Activated CD4-positive, alpha-beta memory T cell treated with anti-CD3 and anti-CD28 coated beads, Interleukin-2, amount 10 ng/mL, durations not matched to agents 7 days and 5 days (primary cell): ENCODE measurements at regions of chr7 and their contacts with region 1.

Region 1: GRCh38 chr7:150567169-150567568 is at the start of gene GIMAP4:
- DNase-seq: peak; percentile 39
- H3K4me3 Mint-ChIP-seq: peak within 1 kb of the TSS; percentile 95
- H3K27ac Mint-ChIP-seq: peak within 1 kb of the TSS; percentile 93
- H3K4me1 Mint-ChIP-seq: peaks cover 70% of the 10 kb centered on the region
- H3K27me3 Mint-ChIP-seq: no peaks in the 10 kb centered on the region
- total RNA-seq, gene GIMAP4: 277 to 282 TPM

Region 2: DNA sequence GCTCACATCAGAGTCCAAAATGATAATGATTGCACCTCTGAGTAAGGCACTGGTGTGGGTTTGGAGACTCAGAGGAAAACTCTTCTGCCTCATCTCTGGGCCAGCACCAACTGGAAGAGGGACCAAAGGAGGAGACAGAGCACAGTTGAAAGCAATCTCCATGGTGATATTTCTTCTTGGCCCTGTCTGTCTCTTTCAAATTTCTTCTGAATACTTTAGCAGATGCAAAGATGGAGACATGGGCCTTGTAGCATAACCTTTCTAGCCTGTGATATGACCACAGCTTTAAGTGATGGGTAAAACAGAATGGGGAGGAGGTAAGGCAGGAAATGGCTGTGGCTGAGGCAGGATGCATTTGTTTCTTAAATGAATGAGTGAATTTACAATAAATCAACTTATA is 64.7 kb before region 1 on chr7:
- CTCF ChIA-PET with region 1: no interaction called
- POLR2A ChIA-PET with region 1: interaction called, 11 read pairs
- DNase-seq: peak; percentile 68
- H3K4me3 Mint-ChIP-seq: peak overlapping the region; percentile 29
- H3K27ac Mint-ChIP-seq: peak overlapping the region; percentile 90
- H3K4me1 Mint-ChIP-seq: peaks cover 75% of the 10 kb centered on the region
- H3K27me3 Mint-ChIP-seq: no peaks in the 10 kb centered on the region

Region 3: DNA sequence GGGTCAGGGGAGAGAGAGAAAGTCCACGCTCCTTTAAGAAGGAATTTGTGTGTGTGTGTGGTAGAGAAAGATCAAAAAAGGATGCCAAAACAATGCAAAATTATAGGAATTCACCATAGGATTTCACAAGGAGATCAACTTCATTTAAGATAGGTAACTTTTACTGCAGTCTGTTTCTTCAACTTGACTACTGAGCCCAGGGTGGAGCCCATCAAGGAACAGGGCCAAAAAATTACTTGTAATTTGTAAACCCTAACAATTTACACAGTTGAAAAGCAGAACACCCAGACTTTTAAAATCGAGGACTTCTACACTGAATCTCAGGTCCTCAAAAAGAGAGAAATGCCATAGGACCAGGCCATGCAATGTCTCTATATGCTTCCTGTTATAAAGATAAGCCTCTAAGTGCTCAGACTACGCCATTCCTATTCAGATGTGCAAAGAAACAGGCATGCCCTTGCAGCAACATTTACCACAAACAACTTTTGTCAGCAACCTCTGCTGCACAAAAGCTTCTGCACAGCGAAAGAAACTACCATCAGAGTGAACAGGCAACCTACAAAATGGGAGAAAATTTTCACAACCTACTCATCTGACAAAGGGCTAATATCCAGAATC is 10.5 kb before region 1 on chr7:
- CTCF ChIA-PET with region 1: no interaction called
- POLR2A ChIA-PET with region 1: interaction called, 14 read pairs
- DNase-seq: peak; percentile 55
- H3K4me3 Mint-ChIP-seq: peak overlapping the region; percentile 55
- H3K27ac Mint-ChIP-seq: peak overlapping the region; percentile 97
- H3K4me1 Mint-ChIP-seq: peaks cover 55% of the 10 kb centered on the region
- H3K27me3 Mint-ChIP-seq: no peaks in the 10 kb centered on the region

Region 4: DNA sequence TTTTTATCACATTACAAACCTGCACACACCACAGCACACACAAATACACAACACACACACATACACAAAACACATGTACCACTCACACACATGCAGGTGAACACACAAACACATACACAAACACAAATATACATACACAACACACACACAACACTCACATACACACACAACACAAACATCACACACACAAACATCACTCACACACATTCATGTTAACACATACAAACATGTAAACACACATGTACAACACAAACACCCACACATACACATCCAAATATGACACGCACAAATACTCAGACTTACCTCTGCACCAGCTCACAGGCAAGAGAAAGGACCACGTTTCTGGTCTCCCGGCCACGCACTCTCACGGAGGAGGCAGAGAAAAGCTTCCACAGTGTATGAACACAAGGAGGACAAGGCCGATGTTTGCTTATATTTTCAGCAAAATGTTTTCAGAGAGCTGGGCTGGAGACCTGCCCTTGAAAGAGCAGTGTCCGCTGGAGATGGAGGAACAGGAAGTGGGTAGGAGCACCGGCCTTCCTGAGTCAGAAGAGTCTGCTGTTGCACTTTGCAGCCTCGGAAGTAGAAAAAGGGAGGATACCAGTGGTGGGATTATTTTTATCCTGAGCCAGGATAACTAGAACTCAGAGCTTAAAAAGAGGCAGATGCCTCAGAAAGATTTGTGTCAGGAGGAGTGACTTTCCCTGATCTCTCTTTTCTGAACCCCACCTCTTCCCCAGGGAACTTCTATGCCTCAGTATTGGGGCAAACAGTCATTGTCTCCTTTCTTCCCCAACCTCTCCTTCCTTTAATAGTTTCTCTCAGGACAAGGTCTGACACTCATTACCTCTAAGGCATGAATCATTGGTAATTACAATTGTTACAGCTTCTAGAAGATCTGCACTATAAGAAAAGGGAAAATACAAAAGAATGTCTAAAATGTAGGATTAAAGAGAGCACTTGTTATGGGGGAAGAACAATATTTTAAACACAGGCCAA is 65.0 kb after region 1 on chr7 and contains the start of gene GIMAP6:
- CTCF ChIA-PET with region 1: interaction called, 8 read pairs
- POLR2A ChIA-PET with region 1: interaction called, 30 read pairs
- DNase-seq: peak; percentile 56
- H3K4me3 Mint-ChIP-seq: peak within 1 kb of the TSS; percentile 98
- H3K27ac Mint-ChIP-seq: peak within 1 kb of the TSS; percentile 89
- H3K4me1 Mint-ChIP-seq: peaks cover 68% of the 10 kb centered on the region
- H3K27me3 Mint-ChIP-seq: no peaks in the 10 kb centered on the region
- total RNA-seq, gene GIMAP6: 84.9 to 85.9 TPM

Region 5: DNA sequence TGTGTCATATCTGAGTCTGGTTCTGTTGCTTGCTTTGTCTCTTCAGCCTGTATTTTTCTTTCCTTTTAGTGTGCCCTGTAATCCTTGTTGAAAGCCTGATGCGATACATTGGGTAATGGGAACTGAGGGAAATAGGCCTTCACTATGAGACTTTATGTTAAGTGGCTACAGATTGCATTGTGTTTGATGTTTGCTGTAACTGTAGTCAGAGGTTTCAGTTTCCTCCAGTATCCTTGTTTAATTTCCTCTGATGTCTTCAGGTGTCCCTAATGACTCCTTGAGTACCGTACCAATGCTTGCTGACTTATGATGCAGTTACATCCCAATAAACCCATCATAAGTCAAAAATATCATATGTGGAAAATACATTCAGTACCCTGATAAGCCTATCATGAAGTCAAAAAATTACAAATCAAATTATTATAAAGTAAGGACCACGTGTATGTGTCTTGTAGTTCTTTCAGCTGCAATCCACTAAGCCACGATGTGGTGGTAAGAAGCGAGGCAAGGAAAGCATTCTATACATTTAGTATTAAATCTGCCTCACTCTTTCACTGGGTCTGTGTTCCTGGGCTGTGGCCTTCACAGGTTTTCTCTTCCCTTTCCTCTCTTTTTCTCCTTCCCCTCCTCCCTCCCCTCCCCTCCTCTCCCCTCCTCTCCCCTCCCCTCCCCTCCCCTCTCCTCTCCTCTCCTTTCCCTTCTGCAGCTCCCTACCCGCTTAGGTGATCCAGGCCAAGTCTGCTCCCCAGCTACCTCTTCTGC is 78.3 kb after region 1 on chr7:
- CTCF ChIA-PET with region 1: no interaction called
- POLR2A ChIA-PET with region 1: no interaction called
- DNase-seq: no peak
- H3K4me3 Mint-ChIP-seq: no peak overlapping the region
- H3K27ac Mint-ChIP-seq: no peak overlapping the region
- H3K4me1 Mint-ChIP-seq: peaks cover 2% of the 10 kb centered on the region
- H3K27me3 Mint-ChIP-seq: no peaks in the 10 kb centered on the region

Region 6: DNA sequence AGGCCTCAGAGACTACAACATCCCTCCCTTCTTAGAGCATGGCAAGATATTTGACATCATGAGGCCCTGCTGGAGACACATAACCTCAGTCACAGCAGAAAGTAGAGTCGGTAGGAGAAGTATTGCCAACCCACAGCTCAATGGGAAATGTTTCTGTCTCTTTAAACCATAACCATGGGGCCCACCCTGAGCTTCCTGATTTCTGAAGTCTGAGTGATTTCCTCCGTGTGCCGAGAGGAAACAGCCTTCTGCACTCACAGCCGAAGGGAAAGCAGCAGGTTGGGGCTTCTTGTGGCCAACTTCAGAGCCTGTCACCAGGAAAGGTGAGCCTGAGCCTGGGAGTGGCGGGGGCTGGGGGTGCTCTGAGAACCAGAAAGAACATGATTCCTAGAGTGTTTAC is 149.2 kb after region 1 on chr7 and contains the start of gene GIMAP1:
- CTCF ChIA-PET with region 1: interaction called, 17 read pairs
- POLR2A ChIA-PET with region 1: interaction called, 30 read pairs
- DNase-seq: peak; percentile 69
- H3K4me3 Mint-ChIP-seq: peak within 1 kb of the TSS; percentile 97
- H3K27ac Mint-ChIP-seq: peak within 1 kb of the TSS; percentile 79
- H3K4me1 Mint-ChIP-seq: peaks cover 62% of the 10 kb centered on the region
- H3K27me3 Mint-ChIP-seq: no peaks in the 10 kb centered on the region
- total RNA-seq, gene GIMAP1: 18.8 to 21.0 TPM

Region 7: GRCh38 chr7:150766334-150766709 is 199.2 kb after region 1 on chr7:
- CTCF ChIA-PET with region 1: no interaction called
- POLR2A ChIA-PET with region 1: no interaction called
- DNase-seq: no peak
- H3K4me3 Mint-ChIP-seq: no peak overlapping the region
- H3K27ac Mint-ChIP-seq: no peak overlapping the region
- H3K4me1 Mint-ChIP-seq: no peaks in the 10 kb centered on the region
- H3K27me3 Mint-ChIP-seq: peaks cover 3% of the 10 kb centered on the region